CD8-positive, alpha-beta memory T cell (primary cell): ENCODE measurements at regions of chr19 and their contacts with region 1.

Region 1: DNA sequence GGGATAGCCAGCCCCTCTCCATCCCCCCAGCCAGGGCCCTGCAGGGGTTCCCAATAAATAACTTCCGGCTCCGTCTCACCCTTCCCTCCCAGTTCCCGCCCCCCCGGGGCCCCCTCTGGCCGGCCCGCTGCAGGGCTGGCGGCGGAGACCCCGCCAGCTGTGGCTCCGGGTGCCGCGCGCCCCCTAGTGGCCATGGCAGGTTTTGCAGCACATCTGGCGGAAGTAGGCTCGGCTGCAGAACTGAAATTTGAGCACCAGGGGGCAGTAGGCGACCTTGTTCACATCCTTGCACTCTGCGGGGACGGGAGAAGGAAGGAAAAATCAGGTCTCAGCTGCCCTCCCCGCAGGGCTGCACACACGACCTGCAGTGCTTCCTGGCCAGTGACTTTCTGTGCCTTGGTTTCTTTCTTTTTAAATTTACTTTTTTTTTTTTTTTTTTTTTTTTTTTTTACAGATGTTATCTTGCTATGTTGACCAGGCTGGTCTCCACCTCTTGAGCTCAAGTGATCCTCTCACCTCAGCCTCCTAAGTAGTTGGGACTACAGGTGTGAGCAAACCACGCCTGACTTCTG is 3.6 kb upstream of the MYO1F start:
- DNase-seq: peak; percentile 79 to 89 (median 82)
- H3K4me3 ChIP-seq: no peak overlapping the region
- H3K4me3 Mint-ChIP-seq: no peak overlapping the region
- H3K27ac ChIP-seq: no peak overlapping the region
- H3K27ac Mint-ChIP-seq: peak overlapping the region in 1 of 8 donors; percentile 57
- H3K4me1 ChIP-seq: peaks cover 41% of the 10 kb centered on the region
- H3K4me1 Mint-ChIP-seq: peaks cover 17 to 50% (median 27%) of the 10 kb centered on the region in 3 donors
- H3K27me3 ChIP-seq: no peaks in the 10 kb centered on the region
- H3K27me3 Mint-ChIP-seq: no peaks in the 10 kb centered on the region

Region 2: GRCh38 chr19:8412783-8413628 is 167.8 kb before region 1 on chr19 and contains the start of gene MARCHF2:
- CTCF ChIA-PET with region 1: interaction called, 113 read pairs
- POLR2A ChIA-PET with region 1: interaction called, 5 read pairs
- DNase-seq: peak; percentile 91 to 97 (median 93)
- H3K4me3 ChIP-seq: peak within 1 kb of the TSS; percentile 74
- H3K4me3 Mint-ChIP-seq: peak within 1 kb of the TSS; percentile 70 to 82 (median 74)
- H3K27ac ChIP-seq: peak within 1 kb of the TSS; percentile 47
- H3K27ac Mint-ChIP-seq: peak within 1 kb of the TSS in 6 of 8 donors; percentile 7 to 87 (median 64)
- H3K4me1 ChIP-seq: peaks cover 6% of the 10 kb centered on the region
- H3K4me1 Mint-ChIP-seq: peaks cover 8 to 17% (median 14%) of the 10 kb centered on the region in 3 donors
- H3K27me3 ChIP-seq: no peaks in the 10 kb centered on the region
- H3K27me3 Mint-ChIP-seq: no peaks in the 10 kb centered on the region
- total RNA-seq, gene MARCHF2: 13.1 to 14.1 TPM

Region 3: DNA sequence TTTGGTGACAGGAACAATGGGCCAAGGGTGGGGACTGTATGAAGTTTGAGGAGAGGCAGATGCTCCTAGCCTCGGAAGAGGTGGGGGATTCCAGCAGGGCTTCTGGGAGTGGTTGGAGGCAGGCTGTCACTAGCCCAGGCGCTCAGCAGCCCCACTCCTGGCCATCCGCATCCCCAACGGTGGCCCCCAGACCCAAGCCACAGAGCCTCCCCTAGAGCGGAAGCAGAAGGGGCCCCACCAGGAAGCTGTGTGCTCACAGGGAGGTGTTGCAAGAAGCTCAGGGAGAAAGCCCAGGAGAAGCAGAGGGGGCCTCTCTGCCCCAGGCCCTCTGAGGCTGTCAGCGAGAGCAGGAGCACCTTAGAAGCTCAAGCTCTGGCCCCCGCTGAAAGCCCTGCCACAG is 86.6 kb before region 1 on chr19:
- CTCF ChIA-PET with region 1: interaction called, 46 read pairs
- POLR2A ChIA-PET with region 1: interaction called, 3 read pairs
- DNase-seq: no peak
- H3K4me3 ChIP-seq: no peak overlapping the region
- H3K4me3 Mint-ChIP-seq: peak overlapping the region in 1 of 7 donors; percentile 32
- H3K27ac ChIP-seq: no peak overlapping the region
- H3K27ac Mint-ChIP-seq: peak overlapping the region in 5 of 8 donors; percentile 5 to 81 (median 61)
- H3K4me1 ChIP-seq: peaks cover 8% of the 10 kb centered on the region
- H3K4me1 Mint-ChIP-seq: peaks cover 4 to 26% (median 6%) of the 10 kb centered on the region in 3 donors
- H3K27me3 ChIP-seq: no peaks in the 10 kb centered on the region
- H3K27me3 Mint-ChIP-seq: no peaks in the 10 kb centered on the region

Region 4: DNA sequence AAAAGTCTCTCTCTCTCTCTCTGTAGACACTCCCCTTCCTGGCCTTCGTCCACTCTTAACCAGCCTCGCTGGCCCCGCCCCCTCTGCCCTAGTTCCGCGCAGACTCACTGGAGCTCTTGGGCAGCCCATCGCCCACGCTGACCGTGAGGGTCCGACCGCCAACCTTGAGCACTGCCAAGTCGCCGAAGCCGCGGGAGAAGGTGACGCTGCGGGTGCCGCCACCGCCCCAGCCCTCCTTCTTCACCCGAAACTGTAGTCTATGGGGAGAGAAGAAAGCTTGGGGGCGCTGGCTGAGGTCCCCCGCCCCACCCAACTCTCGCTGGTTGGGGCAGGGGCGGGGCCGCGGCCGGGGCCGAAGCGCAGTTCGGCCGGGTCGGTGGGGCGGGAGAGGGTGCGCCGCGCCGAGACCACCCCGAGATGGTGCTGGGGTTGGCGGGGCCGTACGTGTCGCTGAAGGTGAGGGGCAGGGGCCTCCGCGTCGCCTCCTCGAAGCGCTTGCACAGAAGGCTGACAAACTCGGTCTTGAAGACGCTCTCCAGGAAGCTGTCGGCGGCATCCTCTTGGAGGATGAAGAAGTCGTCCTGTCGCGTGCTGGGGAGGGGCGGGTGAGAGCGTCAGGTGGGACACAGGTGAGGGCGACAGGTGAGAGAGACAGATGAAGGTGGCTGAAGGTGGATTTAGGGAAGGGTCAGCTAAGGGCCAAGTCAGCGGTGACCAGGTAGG is 54.3 kb before region 1 on chr19:
- CTCF ChIA-PET with region 1: interaction called, 120 read pairs
- POLR2A ChIA-PET with region 1: interaction called, 3 read pairs
- DNase-seq: peak in 1 of 5 donors; percentile 51
- H3K4me3 ChIP-seq: no peak overlapping the region
- H3K4me3 Mint-ChIP-seq: peak overlapping the region in 1 of 7 donors; percentile 13
- H3K27ac ChIP-seq: peak overlapping the region; percentile 54
- H3K27ac Mint-ChIP-seq: peak overlapping the region in 4 of 8 donors; percentile 52 to 87 (median 66)
- H3K4me1 ChIP-seq: no peaks in the 10 kb centered on the region
- H3K4me1 Mint-ChIP-seq: peaks cover 11 to 16% (median 13%) of the 10 kb centered on the region in 3 donors
- H3K27me3 ChIP-seq: no peaks in the 10 kb centered on the region
- H3K27me3 Mint-ChIP-seq: peaks cover 0 to 2% of the 10 kb centered on the region in 2 donors

Region 5: GRCh38 chr19:8569066-8569771 is 11.6 kb before region 1 on chr19:
- CTCF ChIA-PET with region 1: interaction called, 191 read pairs
- POLR2A ChIA-PET with region 1: interaction called, 14 read pairs
- DNase-seq: peak; percentile 44 to 92 (median 74)
- H3K4me3 ChIP-seq: peak overlapping the region; percentile 59
- H3K4me3 Mint-ChIP-seq: peak overlapping the region; percentile 77 to 100 (median 97)
- H3K27ac ChIP-seq: peak overlapping the region; percentile 63
- H3K27ac Mint-ChIP-seq: peak overlapping the region; percentile 74 to 99 (median 94)
- H3K4me1 ChIP-seq: peaks cover 81% of the 10 kb centered on the region
- H3K4me1 Mint-ChIP-seq: peaks cover 73 to 90% (median 78%) of the 10 kb centered on the region in 3 donors
- H3K27me3 ChIP-seq: no peaks in the 10 kb centered on the region
- H3K27me3 Mint-ChIP-seq: peaks cover 0 to 3% of the 10 kb centered on the region in 2 donors

Region 6: GRCh38 chr19:8615813-8616596 is 35.2 kb after region 1 on chr19:
- CTCF ChIA-PET with region 1: interaction called, 12 read pairs
- POLR2A ChIA-PET with region 1: interaction called, 8 read pairs
- DNase-seq: peak; percentile 45 to 69 (median 50)
- H3K4me3 ChIP-seq: no peak overlapping the region
- H3K4me3 Mint-ChIP-seq: peak overlapping the region in 1 of 7 donors; percentile 26
- H3K27ac ChIP-seq: no peak overlapping the region
- H3K27ac Mint-ChIP-seq: peak overlapping the region in 3 of 8 donors; percentile 12 to 64 (median 61)
- H3K4me1 ChIP-seq: peaks cover 27% of the 10 kb centered on the region
- H3K4me1 Mint-ChIP-seq: peaks cover 21 to 27% (median 23%) of the 10 kb centered on the region in 3 donors
- H3K27me3 ChIP-seq: no peaks in the 10 kb centered on the region
- H3K27me3 Mint-ChIP-seq: peaks cover 2 to 7% of the 10 kb centered on the region in 2 donors

Region 7: GRCh38 chr19:8631425-8631819 is 50.6 kb after region 1 on chr19:
- CTCF ChIA-PET with region 1: no interaction called
- POLR2A ChIA-PET with region 1: no interaction called
- DNase-seq: no peak
- H3K4me3 ChIP-seq: no peak overlapping the region
- H3K4me3 Mint-ChIP-seq: no peak overlapping the region
- H3K27ac ChIP-seq: no peak overlapping the region
- H3K27ac Mint-ChIP-seq: no peak overlapping the region
- H3K4me1 ChIP-seq: no peaks in the 10 kb centered on the region
- H3K4me1 Mint-ChIP-seq: no peaks in the 10 kb centered on the region
- H3K27me3 ChIP-seq: no peaks in the 10 kb centered on the region
- H3K27me3 Mint-ChIP-seq: peaks cover 3% of the 10 kb centered on the region in 2 donors

Region 8: GRCh38 chr19:8686549-8686948 is 105.8 kb after region 1 on chr19:
- CTCF ChIA-PET with region 1: no interaction called
- POLR2A ChIA-PET with region 1: no interaction called
- DNase-seq: no peak
- H3K4me3 ChIP-seq: no peak overlapping the region
- H3K4me3 Mint-ChIP-seq: no peak overlapping the region
- H3K27ac ChIP-seq: no peak overlapping the region
- H3K27ac Mint-ChIP-seq: peak overlapping the region in 1 of 8 donors; percentile 10
- H3K4me1 ChIP-seq: no peaks in the 10 kb centered on the region
- H3K4me1 Mint-ChIP-seq: peaks cover 4 to 10% (median 9%) of the 10 kb centered on the region in 3 donors
- H3K27me3 ChIP-seq: no peaks in the 10 kb centered on the region
- H3K27me3 Mint-ChIP-seq: peaks cover 4 to 18% of the 10 kb centered on the region in 2 donors

Region 9: DNA sequence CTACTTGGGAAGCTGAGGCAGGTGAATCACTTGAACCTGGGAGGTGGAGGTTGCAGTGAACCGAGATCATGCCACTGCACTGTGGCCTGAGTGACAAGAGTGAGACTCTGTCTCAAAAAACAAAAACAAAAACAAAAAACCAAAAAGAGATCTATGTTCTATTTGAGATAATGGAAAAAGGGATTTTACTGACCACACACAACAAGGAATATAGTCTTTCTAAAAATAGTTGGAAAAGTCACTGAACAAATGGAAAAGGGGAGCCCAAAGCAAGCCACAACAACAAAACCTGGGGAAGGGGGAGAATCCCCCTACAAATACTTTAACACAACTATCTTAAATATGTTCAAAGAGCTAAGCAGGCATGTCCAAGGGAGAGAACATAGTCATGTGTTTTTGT is 214.0 kb after region 1 on chr19:
- CTCF ChIA-PET with region 1: no interaction called
- POLR2A ChIA-PET with region 1: no interaction called
- DNase-seq: no peak
- H3K4me3 ChIP-seq: no peak overlapping the region
- H3K4me3 Mint-ChIP-seq: no peak overlapping the region
- H3K27ac ChIP-seq: no peak overlapping the region
- H3K27ac Mint-ChIP-seq: no peak overlapping the region
- H3K4me1 ChIP-seq: no peaks in the 10 kb centered on the region
- H3K4me1 Mint-ChIP-seq: no peaks in the 10 kb centered on the region
- H3K27me3 ChIP-seq: no peaks in the 10 kb centered on the region
- H3K27me3 Mint-ChIP-seq: peaks cover 3 to 5% of the 10 kb centered on the region in 2 donors